Common myeloid progenitor, CD34-positive (primary cell): ENCODE measurements at regions of chr7 and their contacts with region 1.

Region 1: DNA sequence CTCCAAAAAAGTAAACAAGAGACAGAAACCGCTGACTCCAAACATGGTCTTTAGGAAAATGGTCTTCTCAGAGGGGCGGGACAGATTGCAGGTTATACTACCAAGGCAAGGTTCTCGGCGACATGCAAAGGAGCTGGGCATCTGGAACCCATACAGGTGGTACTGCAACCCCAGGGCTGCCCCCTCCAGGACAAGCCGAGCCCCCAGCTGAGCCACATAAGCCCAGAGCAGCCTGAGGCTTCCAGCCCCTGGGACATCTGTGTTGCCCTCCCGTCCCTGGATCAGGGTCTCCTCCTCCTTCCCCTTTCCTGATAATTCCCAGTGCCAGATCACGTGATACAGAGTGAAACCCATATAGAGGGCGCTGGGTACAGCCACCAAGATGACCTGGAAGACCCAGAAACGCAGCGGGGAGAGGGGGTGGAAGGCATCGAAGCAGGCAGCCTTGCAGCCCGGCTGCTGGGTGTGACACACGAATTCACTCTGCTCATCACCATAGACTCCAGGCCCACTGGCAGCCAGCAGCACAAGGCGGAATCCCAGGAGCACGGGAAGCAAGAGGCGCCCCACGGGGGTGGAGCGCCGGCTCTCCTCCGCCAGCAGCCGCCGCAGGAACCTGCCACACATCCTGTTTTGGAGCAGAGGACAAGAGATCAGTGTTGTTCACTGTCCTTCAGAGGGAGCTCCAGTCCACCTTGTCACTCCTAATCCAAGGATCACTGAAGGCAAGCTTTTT is at the start of gene GJC3:
- DNase-seq: peak; percentile 53 to 69 (median 68)
- H3K4me3 ChIP-seq: peak within 1 kb of the TSS in 6 of 7 experiments; percentile 17 to 79 (median 58)
- H3K27ac ChIP-seq: no peak within 1 kb of the TSS
- H3K4me1 ChIP-seq: peaks cover 0 to 13% (median 8%) of the 10 kb centered on the region in 4 experiments
- H3K27me3 ChIP-seq: peaks cover 0 to 4% (median 2%) of the 10 kb centered on the region in 5 experiments

Region 2: DNA sequence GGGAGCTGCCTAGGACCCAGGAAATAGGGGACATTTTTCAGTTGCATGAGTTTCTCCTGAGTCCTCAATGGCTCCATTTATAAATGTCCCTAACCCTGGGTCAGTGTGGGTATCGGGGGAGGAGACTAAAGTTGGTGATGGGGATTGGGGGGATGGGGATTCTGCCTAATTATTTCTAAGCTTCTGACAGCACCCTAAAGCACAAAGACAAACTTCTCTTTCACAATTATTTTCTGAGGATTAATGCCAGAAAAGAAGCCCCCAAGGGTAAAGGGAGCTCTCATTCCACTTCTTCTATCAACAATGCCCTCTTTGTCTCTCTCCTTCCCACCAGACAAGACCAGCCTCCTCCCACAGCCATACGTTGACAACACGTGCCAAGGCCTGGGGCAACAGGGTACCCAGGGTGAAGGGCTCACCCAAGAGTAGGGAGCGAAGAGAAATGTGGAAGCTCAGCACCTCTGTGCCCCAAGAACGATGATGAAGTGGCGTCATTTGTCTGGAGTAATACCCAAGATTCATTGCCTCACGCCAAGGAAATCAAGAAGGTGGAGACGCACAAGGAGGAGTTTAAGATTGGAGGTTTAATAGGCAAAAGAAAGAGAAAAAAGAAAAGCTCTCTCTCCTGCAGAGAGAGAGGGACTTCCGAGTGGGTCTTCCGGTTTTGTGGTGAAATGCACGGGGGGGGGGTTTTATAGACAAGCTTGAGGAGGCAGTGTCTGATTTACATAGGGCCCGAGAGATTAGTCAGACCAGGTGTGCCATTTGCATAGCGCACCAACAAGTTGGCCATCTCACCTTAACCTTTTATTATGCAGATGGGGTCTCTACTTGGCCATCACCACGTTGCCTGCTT is 14.7 kb after region 1 on chr7:
- CTCF ChIA-PET with region 1: interaction called, 22 read pairs
- POLR2A ChIA-PET with region 1: interaction called, 3 read pairs
- DNase-seq: peak; percentile 14 to 60 (median 55)
- H3K4me3 ChIP-seq: peak overlapping the region in 4 of 7 experiments; percentile 5 to 59 (median 46)
- H3K27ac ChIP-seq: no peak overlapping the region
- H3K4me1 ChIP-seq: peaks cover 0 to 9% (median 7%) of the 10 kb centered on the region in 4 experiments
- H3K27me3 ChIP-seq: peaks cover 0 to 5% (median 0%) of the 10 kb centered on the region in 5 experiments

Region 3: DNA sequence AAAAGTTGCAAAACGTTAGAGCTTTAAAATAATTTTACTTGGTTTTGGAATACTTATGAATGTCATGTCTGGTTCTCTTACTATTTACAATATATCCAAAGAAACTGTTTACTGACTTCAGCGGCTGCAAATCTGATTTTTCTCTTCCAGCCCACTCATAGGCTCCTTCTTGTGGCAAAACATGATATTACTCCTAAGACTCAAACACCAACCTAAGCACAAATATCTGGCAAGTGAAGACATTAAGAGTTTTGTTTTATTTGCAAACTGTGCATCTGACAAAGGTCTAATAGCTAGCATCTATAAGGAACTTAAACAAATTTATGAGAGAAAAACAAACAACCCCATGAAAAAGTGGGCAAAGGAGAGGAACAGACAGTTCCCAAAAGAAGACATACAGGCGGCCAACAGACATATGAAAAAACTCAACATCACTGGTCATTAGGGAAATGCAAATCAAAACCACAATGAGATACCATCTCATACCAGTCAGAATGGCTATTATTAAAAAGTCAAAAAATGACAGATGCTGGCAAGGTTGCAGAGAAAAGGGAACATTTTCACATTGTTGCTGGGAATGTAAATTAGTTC is 20.6 kb after region 1 on chr7:
- CTCF ChIA-PET with region 1: interaction called, 22 read pairs
- POLR2A ChIA-PET with region 1: interaction called, 3 read pairs
- DNase-seq: peak; percentile 31 to 59 (median 51)
- H3K4me3 ChIP-seq: no peak overlapping the region
- H3K27ac ChIP-seq: no peak overlapping the region
- H3K4me1 ChIP-seq: peaks cover 0 to 5% (median 0%) of the 10 kb centered on the region in 4 experiments
- H3K27me3 ChIP-seq: peaks cover 0 to 5% (median 0%) of the 10 kb centered on the region in 5 experiments

Region 4: GRCh38 chr7:99990460-99990852 is 61.3 kb after region 1 on chr7:
- CTCF ChIA-PET with region 1: interaction called, 213 read pairs
- POLR2A ChIA-PET with region 1: no interaction called
- DNase-seq: no peak
- H3K4me3 ChIP-seq: peak overlapping the region in 1 of 7 experiments; percentile 11
- H3K27ac ChIP-seq: no peak overlapping the region
- H3K4me1 ChIP-seq: peaks cover 0 to 14% (median 3%) of the 10 kb centered on the region in 4 experiments
- H3K27me3 ChIP-seq: peaks cover 0 to 2% (median 0%) of the 10 kb centered on the region in 5 experiments